ENCODE measurements at regions of chr1 and their contacts with region 1.

Region 1: DNA sequence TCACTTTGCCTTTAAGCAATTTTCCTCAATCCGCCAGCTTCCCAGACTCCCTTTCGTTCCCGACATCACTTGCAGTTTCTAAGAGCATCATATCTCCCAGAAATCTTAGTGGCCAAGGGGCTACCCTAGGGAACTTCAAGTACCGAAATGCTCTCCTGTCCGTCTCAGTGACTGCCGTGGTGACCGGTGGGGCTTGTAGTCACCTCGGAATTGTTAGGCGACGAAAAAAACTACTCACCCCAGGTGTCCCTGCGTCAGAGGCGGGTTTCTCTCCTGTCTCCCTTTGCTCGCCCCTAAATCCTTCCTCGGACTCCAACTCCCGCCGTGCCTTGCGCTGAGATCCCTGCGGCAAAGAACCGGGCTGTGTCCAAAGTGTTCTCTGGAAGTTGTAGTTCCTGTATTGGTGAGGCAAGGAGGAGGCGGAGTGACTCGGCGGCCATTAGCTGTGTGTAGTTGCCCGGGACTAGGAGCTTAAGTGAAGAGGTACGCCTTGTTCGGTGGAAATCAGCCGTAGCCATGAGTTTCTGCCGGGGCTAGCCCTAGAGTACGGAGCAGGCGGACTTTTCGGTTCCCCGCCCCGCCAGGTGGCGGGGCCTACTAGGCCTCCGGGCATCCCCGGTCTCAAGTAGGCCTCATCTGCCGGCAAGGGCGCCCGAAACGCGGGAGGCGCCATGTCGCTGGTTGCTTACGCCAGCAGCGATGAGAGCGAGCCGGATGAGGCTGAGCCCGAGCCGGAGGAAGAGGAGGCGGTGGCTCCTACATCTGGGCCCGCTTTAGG is at the start of gene PRCC:
- DNase-seq: peak; percentile 98
- ATAC-seq: peak; percentile 96
- total RNA-seq, gene PRCC: 42.9 TPM

Region 2: DNA sequence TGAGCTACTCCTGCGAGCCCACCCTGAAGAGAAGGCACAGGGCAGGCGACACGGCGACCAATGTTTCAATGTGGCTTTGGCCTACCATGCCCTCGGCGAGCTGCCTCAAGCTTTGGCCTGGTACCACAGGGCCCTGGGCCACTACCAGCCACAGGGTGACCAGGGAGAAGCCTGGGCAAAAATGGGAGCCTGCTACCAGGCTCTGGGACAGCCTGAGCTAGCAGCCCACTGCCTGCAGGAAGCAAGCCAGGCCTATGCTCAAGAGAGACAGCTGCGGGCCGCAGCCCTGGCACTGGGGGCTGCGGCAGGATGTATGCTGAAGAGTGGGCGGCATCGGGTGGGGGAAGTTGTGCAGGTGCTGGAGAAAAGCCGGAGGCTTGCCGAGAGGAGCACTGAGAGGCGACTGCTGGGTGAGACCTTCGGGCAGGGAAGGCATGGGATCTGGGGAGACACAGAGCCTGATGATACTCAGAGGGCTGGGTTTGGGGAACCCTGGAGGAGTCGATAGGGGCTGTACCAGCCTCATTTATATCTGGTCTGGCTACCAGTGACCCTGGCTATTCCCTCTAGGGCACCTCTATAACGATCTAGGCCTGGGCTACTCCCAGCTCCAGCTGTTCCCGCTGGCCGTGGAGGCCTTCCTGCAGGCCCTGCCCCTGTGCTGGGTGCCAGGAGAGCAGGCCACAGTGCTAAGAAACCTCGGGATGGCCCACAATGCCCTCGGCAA is 185.5 kb before region 1 on chr1:
- intact Hi-C with region 1: no loop called
- DNase-seq: no peak
- ATAC-seq: no peak

Region 3: GRCh38 chr1:156728597-156729462 is 38.5 kb before region 1 on chr1 and contains the start of gene ISG20L2:
- intact Hi-C with region 1: loop called (anchors 1 kb)
- DNase-seq: peak; percentile 98
- ATAC-seq: peak; percentile 95
- total RNA-seq, gene ISG20L2: 13.1 TPM

Region 4: GRCh38 chr1:156740679-156741612 is 26.3 kb before region 1 on chr1 and contains the start of gene MRPL24:
- intact Hi-C with region 1: loop called (anchors 1 kb)
- DNase-seq: peak; percentile 98
- ATAC-seq: peak; percentile 94
- total RNA-seq, gene MRPL24: 103 TPM

Region 5: GRCh38 chr1:156751758-156752757 is 15.2 kb before region 1 on chr1:
- intact Hi-C with region 1: loop called (anchors 2 kb)
- DNase-seq: peak; percentile 99
- ATAC-seq: peak; percentile 84

Region 6: GRCh38 chr1:156876281-156876680 is 109.0 kb after region 1 on chr1:
- intact Hi-C with region 1: no loop called
- DNase-seq: peak; percentile 59
- ATAC-seq: no peak

Measured in Right ventricle myocardium inferior (tissue), 1 donor.